ENCODE measurements at regions of chr4 and their contacts with region 1.

Region 1: GRCh38 chr4:54064295-54065111 is at the start of gene CHIC2:
- DNase-seq: peak; percentile 85
- ATAC-seq: peak; percentile 93
- H3K4me3 ChIP-seq: peak within 1 kb of the TSS; percentile 89 to 96 (median 95)
- H3K27ac ChIP-seq: peak within 1 kb of the TSS; percentile 85
- H3K4me1 ChIP-seq: peaks cover 47% of the 10 kb centered on the region
- H3K27me3 ChIP-seq: no peaks in the 10 kb centered on the region; a peak in 1 of 5 replicates
- CTCF ChIP-seq: no peak
- EP300 ChIP-seq: no peak
- POLR2A ChIP-seq: peak; percentile 82 to 88
- RAD21 ChIP-seq: peak; percentile 33; the same call in 1 of the 2 replicates
- total RNA-seq, gene CHIC2: 16.6 and 17.2 TPM in 2 replicates

Region 2: GRCh38 chr4:54082168-54082567 is 17.7 kb after region 1 on chr4:
- CTCF ChIA-PET with region 1: no interaction called
- POLR2A ChIA-PET with region 1: interaction called, 4 read pairs
- in situ Hi-C with region 1: no loop called
- intact Hi-C with region 1: loop called (anchors 2 kb)
- DNase-seq: peak; percentile 95
- ATAC-seq: peak; percentile 93
- H3K4me3 ChIP-seq: no peak overlapping the region; a peak in 1 of 6 replicates
- H3K27ac ChIP-seq: peak overlapping the region; percentile 46
- H3K4me1 ChIP-seq: peaks cover 49% of the 10 kb centered on the region
- H3K27me3 ChIP-seq: no peaks in the 10 kb centered on the region
- CTCF ChIP-seq: no peak
- EP300 ChIP-seq: peak in 1 of 2 experiments; percentile 87; a peak in 2 of 4 replicates
- POLR2A ChIP-seq: no peak
- RAD21 ChIP-seq: no peak

Region 3: DNA sequence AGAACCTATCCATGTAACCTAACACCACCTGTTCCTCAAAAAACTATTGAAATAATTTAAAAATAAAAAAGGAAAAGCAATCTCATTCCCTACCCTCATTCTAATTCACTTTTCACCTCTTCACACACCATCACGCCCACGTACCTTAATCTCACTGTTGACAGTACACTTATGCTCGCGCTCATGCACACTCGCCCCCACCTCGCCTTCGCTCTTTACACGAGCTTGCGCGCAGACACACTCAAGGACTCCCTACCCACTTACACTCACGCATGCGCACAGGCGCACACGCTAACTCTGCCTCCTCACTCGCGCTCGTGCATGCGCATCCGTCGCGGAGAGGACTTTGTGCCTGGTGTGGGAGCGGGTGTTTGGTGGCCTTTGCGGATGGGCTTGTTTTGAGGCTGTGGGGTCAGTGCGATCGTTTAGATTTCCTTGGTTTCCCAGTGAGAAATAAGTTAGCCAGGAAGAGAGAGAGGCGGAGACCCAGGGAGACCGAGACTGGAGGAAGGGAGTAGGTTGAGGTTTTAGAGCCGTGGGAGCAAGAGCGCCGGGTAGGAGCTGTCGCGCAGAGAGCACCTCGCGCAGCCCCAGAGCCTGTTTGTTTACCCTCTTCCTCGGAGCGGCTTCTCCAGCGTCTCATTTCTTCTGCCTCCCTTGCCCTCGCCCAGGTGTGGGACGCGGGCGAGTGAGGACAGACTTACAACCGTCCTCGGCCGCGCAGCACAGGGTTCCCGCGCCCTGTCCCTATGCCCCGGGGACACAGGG is 27.3 kb after region 1 on chr4:
- CTCF ChIA-PET with region 1: no interaction called
- POLR2A ChIA-PET with region 1: interaction called, 18 read pairs
- in situ Hi-C with region 1: no loop called
- intact Hi-C with region 1: no loop called
- DNase-seq: peak; percentile 35
- ATAC-seq: peak; percentile 73
- H3K4me3 ChIP-seq: peak overlapping the region; percentile 52 to 79 (median 56)
- H3K27ac ChIP-seq: peak overlapping the region; percentile 43
- H3K4me1 ChIP-seq: peaks cover 32% of the 10 kb centered on the region
- H3K27me3 ChIP-seq: peaks cover 4 to 40% of the 10 kb centered on the region in 2 experiments; a peak in 3 of 5 replicates
- CTCF ChIP-seq: no peak
- EP300 ChIP-seq: no peak
- POLR2A ChIP-seq: peak in 1 of 2 experiments; percentile 85; a peak in 2 of 4 replicates
- RAD21 ChIP-seq: no peak

Region 4: GRCh38 chr4:54217642-54218495 is 153.4 kb after region 1 on chr4:
- CTCF ChIA-PET with region 1: no interaction called
- POLR2A ChIA-PET with region 1: no interaction called
- in situ Hi-C with region 1: no loop called
- intact Hi-C with region 1: loop called (anchors 5 kb)
- DNase-seq: peak; percentile 52
- ATAC-seq: peak; percentile 97
- H3K4me3 ChIP-seq: peak overlapping the region in 1 of 3 experiments; percentile 59; a peak in 2 of 6 replicates
- H3K27ac ChIP-seq: no peak overlapping the region
- H3K4me1 ChIP-seq: no peaks in the 10 kb centered on the region
- H3K27me3 ChIP-seq: peaks cover 0 to 5% of the 10 kb centered on the region in 2 experiments; a peak in 3 of 5 replicates
- CTCF ChIP-seq: peak; percentile 92
- EP300 ChIP-seq: no peak
- POLR2A ChIP-seq: no peak
- RAD21 ChIP-seq: peak; percentile 83